Activated CD4-positive, alpha-beta memory T cell treated with anti-CD3 and anti-CD28 coated beads for 36 hours (primary cell): ENCODE measurements at regions of chr5 and their contacts with region 1.

Region 1: DNA sequence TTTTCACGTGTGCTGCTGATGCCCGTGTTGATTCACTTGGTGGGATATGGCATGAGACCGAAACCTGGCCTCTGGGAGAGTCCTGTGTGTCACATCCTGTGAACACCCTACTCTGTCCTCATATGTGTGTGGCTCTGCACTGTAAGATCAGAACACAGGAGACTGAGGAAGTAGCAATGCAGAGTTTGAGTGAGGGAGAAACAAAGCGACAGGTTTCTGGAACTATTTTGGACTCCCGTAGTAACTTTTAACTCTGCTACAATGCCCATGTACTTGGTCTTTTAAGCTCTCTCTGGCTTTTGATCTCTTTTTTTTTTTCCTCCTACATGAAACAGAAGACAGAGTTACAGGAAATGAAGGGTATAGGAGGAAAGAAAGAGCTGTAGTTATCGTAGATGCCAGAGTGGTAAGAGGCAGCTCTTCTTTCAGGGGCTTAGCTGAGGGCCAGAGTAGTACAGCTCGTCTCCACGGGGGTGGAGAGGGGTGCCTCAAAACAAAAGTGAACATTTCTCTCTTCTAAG is 26.6 kb downstream of the GRAMD2B start:
- DNase-seq: peak; percentile 85
- H3K4me3 Mint-ChIP-seq: peak overlapping the region; percentile 81
- H3K27ac Mint-ChIP-seq: peak overlapping the region; percentile 100
- H3K4me1 Mint-ChIP-seq: peaks cover 76% of the 10 kb centered on the region
- H3K27me3 Mint-ChIP-seq: no peaks in the 10 kb centered on the region

Region 2: GRCh38 chr5:126422989-126423788 is 26.6 kb before region 1 on chr5 and contains the start of gene GRAMD2B:
- CTCF ChIA-PET with region 1: interaction called, 5 read pairs
- POLR2A ChIA-PET with region 1: interaction called, 27 read pairs
- intact Hi-C with region 1: loop called (anchors 1 kb)
- DNase-seq: peak; percentile 83
- H3K4me3 Mint-ChIP-seq: peak within 1 kb of the TSS; percentile 82
- H3K27ac Mint-ChIP-seq: peak within 1 kb of the TSS; percentile 87
- H3K4me1 Mint-ChIP-seq: peaks cover 38% of the 10 kb centered on the region
- H3K27me3 Mint-ChIP-seq: no peaks in the 10 kb centered on the region
- total RNA-seq, gene GRAMD2B: 9.9 to 10.4 TPM

Region 3: DNA sequence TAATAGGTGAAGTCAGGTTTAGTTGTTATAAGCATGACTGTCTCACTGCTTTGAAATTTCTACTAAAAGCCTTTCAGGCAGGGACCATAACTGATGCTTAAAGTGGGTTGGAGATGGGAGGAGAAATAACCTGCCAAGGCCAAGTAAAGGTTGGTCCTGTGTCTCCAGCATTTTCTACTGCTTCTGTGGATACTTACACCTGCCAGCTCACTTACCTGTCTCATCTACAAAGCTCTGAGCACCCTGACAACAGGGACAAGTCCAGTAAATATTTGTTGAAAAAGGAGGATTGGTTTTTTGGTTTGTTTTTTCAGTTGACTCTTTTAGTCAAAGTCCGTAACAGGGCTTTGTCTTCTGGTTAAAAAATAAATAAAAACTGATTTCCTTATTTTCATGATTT is 12.0 kb after region 1 on chr5:
- CTCF ChIA-PET with region 1: no interaction called
- POLR2A ChIA-PET with region 1: no interaction called
- intact Hi-C with region 1: loop called (anchors 2 kb)
- DNase-seq: no peak
- H3K4me3 Mint-ChIP-seq: no peak overlapping the region
- H3K27ac Mint-ChIP-seq: no peak overlapping the region
- H3K4me1 Mint-ChIP-seq: peaks cover 12% of the 10 kb centered on the region
- H3K27me3 Mint-ChIP-seq: no peaks in the 10 kb centered on the region

Region 4: DNA sequence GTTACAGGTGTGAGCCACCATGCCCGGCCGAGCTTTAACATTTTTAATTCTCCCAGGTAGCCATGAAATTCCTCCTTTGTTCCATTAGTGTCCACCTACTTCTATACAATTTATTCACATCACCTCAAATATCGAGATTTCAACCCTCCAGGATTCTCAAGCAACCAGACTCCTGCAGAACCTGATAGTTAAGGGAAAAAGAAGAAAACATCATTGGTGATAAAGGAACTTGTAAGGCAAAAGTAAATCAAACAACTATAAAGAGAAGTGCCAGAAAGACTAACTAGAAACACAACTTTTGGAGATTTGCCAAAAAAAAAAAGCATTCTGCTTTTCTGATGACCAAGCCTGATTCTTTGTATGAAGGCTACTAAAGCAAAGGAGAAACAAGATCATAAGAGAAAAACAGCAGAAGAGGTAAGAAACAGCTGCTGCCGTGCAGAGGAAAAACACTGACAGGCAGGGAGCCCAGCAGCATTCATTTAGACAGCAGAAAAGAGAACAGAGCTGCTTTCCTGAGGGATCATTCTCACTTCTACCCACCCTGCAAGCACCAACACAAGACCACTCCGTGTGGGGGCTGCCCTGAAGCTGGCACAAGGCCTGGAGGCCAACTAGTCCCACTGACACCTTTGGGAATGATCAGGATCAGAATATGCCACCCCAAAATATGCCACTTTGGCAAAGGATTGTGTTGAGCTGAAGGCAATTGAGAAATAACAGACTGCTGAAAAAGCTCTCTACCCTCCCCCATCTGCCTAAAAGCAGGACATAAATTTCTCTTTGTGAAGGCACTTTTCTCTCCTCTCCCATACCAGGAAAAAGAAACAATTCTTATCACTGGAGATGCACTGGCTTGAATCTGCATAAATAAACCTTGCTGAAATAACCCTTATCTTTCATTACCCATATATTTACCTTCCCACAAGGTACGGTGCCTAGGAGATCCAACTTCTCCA is 70.1 kb after region 1 on chr5:
- CTCF ChIA-PET with region 1: no interaction called
- POLR2A ChIA-PET with region 1: no interaction called
- intact Hi-C with region 1: no loop called
- DNase-seq: no peak
- H3K4me3 Mint-ChIP-seq: no peak overlapping the region
- H3K27ac Mint-ChIP-seq: no peak overlapping the region
- H3K4me1 Mint-ChIP-seq: no peaks in the 10 kb centered on the region
- H3K27me3 Mint-ChIP-seq: peaks cover 2% of the 10 kb centered on the region

Region 5: DNA sequence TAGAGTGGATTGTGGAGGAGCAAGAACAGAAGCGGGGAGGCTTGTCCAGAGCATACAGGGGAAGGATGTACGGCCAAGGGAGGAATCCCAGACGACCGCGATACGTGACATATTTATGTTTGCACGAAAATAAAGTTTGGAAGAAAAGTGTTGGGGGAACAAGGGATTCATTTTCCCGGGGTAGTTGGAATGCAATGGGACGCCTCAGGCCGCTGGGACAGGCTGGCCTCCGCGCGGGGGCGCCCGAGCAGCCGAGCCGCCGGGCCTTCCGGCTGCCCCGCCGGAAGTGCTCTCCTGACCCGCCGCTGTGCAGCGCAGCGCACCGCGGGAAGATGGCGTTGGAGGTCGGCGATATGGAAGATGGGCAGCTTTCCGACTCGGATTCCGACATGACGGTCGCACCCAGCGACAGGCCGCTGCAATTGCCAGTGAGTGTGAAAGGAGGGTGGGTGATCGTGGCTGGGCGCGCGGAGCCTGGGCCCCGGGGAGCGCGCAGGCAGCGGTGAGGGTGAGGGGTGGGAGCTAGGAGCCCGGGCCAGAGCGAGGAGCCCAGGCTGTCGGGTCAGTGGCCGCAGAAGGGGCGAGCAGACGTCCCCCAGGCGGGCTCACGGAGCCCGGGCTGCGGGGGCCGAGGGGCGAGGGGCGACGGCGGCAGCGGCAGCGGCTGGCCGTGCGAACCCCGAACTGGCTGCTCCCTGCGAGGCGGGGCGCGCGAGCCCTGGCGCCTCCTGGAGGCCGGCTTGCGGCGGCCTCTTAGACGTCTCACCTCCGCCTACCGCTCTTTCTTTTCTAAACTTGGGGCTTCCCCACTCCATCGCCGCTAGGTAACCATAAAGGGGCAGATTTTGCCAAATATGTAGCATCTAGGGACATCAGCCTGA is 151.1 kb after region 1 on chr5 and contains the start of gene PHAX:
- CTCF ChIA-PET with region 1: interaction called, 5 read pairs
- POLR2A ChIA-PET with region 1: no interaction called
- intact Hi-C with region 1: loop called (anchors 2 kb)
- DNase-seq: peak; percentile 82
- H3K4me3 Mint-ChIP-seq: peak within 1 kb of the TSS; percentile 99
- H3K27ac Mint-ChIP-seq: peak within 1 kb of the TSS; percentile 97
- H3K4me1 Mint-ChIP-seq: peaks cover 35% of the 10 kb centered on the region
- H3K27me3 Mint-ChIP-seq: no peaks in the 10 kb centered on the region
- total RNA-seq, gene PHAX: 40.7 to 43.2 TPM

Region 6: GRCh38 chr5:126763371-126763770 is 313.6 kb after region 1 on chr5:
- CTCF ChIA-PET with region 1: no interaction called
- POLR2A ChIA-PET with region 1: no interaction called
- intact Hi-C with region 1: loop called (anchors 5 kb)
- DNase-seq: peak; percentile 39
- H3K4me3 Mint-ChIP-seq: no peak overlapping the region
- H3K27ac Mint-ChIP-seq: peak overlapping the region; percentile 28
- H3K4me1 Mint-ChIP-seq: peaks cover 39% of the 10 kb centered on the region
- H3K27me3 Mint-ChIP-seq: no peaks in the 10 kb centered on the region

Region 7: GRCh38 chr5:126988021-126988569 is 538.3 kb after region 1 on chr5:
- CTCF ChIA-PET with region 1: no interaction called
- POLR2A ChIA-PET with region 1: no interaction called
- intact Hi-C with region 1: loop called (anchors 2 kb)
- DNase-seq: peak; percentile 50
- H3K4me3 Mint-ChIP-seq: peak overlapping the region; percentile 31
- H3K27ac Mint-ChIP-seq: peak overlapping the region; percentile 76
- H3K4me1 Mint-ChIP-seq: peaks cover 22% of the 10 kb centered on the region
- H3K27me3 Mint-ChIP-seq: no peaks in the 10 kb centered on the region